A549 (cell line): ENCODE measurements at regions of chr19 and their contacts with region 1.

Region 1: DNA sequence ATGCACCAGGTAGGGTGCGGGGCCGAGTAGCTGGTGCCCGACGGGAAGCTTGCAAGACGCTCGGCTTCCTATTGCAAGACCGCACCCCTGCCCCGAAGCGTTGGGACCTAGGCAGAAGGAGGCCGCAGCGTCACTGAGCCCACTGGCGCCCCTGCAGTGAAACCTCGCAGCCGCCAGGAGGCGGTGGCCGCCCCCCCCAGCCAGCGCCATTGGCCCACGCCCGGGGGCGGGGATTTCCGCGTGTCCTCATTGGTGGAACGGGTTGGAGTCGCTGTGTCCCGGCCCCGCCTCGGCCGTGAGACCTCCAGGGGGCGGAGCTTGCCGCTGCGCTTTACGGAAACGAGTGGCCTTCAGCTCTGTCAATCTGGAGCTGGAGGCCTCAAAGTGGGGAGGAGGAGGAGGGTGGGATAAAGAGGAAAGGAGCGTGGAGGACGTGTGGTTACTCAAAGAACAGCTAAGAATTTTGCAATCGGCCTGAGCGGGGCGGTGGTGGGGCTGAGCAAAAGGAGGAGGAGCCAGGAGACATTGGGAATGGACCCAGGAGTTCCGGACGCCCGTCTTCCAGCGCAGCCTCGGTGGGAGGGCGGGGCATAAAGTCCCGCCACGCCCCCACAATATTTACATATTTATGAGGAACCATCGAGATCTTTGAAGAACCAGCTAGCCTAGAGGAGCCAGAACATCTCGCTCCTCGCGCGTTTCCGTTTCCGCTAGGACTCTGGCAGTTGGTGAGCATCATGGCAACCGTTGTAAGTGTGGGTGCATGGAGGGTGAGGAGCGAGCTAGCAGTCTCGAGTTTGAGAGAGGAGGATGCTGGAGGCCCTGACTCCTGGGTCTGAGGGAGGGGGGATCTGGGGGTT is at the starts of genes GYS1 and RUVBL2:
- DNase-seq: peak; percentile 100
- ATAC-seq: peak; percentile 89 to 94
- H3K4me3 ChIP-seq: peak within 1 kb of the TSS; percentile 73
- H3K27ac ChIP-seq: peak within 1 kb of the TSS; percentile 76 to 87
- H3K4me1 ChIP-seq: peaks cover 20% of the 10 kb centered on the region
- CTCF ChIP-seq: peak; percentile 82
- EP300 ChIP-seq: no peak
- POLR2A ChIP-seq: peak; percentile 92
- RAD21 ChIP-seq: peak in 1 of 2 experiments; percentile 39; a peak in 2 of 5 replicates
- polyA plus RNA-seq, gene GYS1: 10.3 and 16.4 TPM in 2 replicates
- polyA plus RNA-seq, gene RUVBL2: 146 and 186 TPM in 2 replicates

Region 2: DNA sequence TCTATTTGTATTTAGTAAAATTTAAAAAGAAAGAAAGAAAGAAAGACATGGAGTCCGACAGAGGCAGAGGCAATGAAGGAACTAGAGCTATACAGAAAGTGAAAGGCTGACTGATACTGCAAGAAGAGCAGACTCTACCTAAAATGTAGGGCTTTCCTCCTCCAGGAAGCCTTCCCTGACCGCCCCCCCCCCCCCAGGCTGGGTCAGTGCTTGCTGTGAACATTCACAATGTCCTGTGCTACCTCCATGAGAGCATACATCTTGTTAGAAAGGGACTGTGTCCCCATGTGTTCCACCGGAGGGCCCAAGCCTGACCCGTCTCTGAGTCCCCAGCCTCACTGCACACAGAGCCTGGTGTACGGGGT is 341.7 kb before region 1 on chr19:
- CTCF ChIA-PET with region 1: no interaction called
- POLR2A ChIA-PET with region 1: no interaction called
- DNase-seq: no peak
- ATAC-seq: peak; percentile 16 to 37; a peak in 3 of 6 replicates
- H3K4me3 ChIP-seq: no peak overlapping the region
- H3K27ac ChIP-seq: no peak overlapping the region
- H3K4me1 ChIP-seq: peaks cover 5% of the 10 kb centered on the region; the same call in 2 of the 3 replicates
- CTCF ChIP-seq: no peak
- EP300 ChIP-seq: no peak
- POLR2A ChIP-seq: no peak
- RAD21 ChIP-seq: no peak

Region 3: DNA sequence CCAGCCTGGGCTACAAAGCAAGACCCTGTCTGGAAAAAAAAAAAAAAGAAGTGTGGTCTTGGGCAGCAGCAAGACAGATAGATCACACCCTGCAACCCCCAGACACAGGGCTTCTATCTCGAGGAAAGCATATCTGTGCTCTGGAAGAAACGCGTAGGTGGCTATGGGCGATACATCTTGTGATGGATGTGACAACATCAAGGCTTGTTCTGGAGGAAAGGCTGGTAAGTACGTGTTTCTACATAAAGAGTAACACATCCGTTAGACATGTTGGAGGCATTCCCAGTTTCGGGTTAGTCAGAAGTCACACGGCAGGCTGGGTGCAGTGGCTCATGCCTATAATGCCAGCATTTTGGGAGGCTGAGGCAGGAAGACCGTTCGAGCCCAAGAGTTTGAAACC is 66.5 kb before region 1 on chr19:
- CTCF ChIA-PET with region 1: no interaction called
- POLR2A ChIA-PET with region 1: no interaction called
- DNase-seq: peak; percentile 65 to 87
- ATAC-seq: peak; percentile 67 to 84
- H3K4me3 ChIP-seq: no peak overlapping the region
- H3K27ac ChIP-seq: peak overlapping the region; percentile 67 to 85
- H3K4me1 ChIP-seq: peaks cover 41% of the 10 kb centered on the region
- CTCF ChIP-seq: no peak
- EP300 ChIP-seq: peak in 1 of 2 experiments; percentile 39; a peak in 1 of 5 replicates
- POLR2A ChIP-seq: no peak
- RAD21 ChIP-seq: no peak

Region 4: DNA sequence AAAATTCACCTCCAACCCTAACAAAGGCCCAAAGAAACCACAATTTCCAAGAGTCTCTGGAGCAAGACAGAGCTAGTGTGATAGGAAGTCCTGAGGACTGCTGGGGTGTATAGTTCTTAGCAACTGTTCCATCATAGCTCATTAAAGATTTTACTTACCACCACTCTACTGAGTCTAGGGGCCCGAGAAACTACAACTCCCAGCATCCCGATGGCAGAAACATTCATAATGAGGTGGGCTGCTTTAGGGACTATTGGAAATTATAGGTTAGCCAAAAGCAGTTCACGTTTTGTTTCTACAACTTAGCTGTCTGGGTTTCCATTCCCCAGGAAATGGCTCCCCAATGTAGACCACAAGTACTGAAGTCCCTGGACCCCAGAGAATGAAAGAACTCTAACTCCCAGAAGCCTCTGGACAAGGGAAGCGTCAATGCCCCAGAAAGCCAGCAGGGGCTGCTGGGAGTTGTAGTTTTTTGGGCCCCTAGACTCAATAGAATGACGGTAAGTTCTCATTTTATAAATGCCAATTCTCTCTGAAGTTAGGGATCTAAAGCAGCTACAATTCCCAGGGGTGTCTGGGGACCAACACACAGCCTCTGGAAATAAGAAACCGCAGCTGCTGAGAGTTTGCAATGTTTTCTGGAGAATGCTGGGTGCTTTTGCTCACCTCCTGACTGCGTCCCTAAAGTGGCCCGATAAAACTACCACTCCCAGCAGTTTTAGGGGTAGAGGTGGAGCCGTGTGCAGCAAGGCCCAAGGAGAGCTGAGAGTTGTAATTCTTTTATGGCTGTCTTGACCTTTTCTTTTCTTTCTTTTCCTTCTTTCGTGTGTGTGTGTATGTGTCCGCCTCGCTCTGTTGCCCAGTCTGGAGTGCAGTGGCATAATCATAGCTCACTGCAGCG is 17.2 kb before region 1 on chr19:
- CTCF ChIA-PET with region 1: interaction called, 360 read pairs
- POLR2A ChIA-PET with region 1: interaction called, 14 read pairs
- DNase-seq: peak in 1 of 2 experiments; percentile 47
- ATAC-seq: peak; percentile 46 to 72; a peak in 5 of 6 replicates
- H3K4me3 ChIP-seq: no peak overlapping the region
- H3K27ac ChIP-seq: no peak overlapping the region
- H3K4me1 ChIP-seq: peaks cover 13% of the 10 kb centered on the region
- CTCF ChIP-seq: no peak
- EP300 ChIP-seq: no peak
- POLR2A ChIP-seq: no peak
- RAD21 ChIP-seq: no peak

Region 5: GRCh38 chr19:49017666-49018351 is 24.4 kb after region 1 on chr19:
- CTCF ChIA-PET with region 1: interaction called, 408 read pairs
- POLR2A ChIA-PET with region 1: interaction called, 16 read pairs
- DNase-seq: peak in 1 of 2 experiments; percentile 52
- ATAC-seq: peak; percentile 27 to 66
- H3K4me3 ChIP-seq: peak overlapping the region; percentile 21; the same call in 1 of the 3 replicates
- H3K27ac ChIP-seq: peak overlapping the region in 1 of 2 experiments; percentile 36; a peak in 1 of 6 replicates
- H3K4me1 ChIP-seq: peaks cover 14% of the 10 kb centered on the region; the same call in 2 of the 3 replicates
- CTCF ChIP-seq: peak; percentile 33
- EP300 ChIP-seq: no peak
- POLR2A ChIP-seq: no peak
- RAD21 ChIP-seq: no peak

Region 6: GRCh38 chr19:49056010-49056901 is 62.9 kb after region 1 on chr19:
- CTCF ChIA-PET with region 1: interaction called, 48 read pairs
- POLR2A ChIA-PET with region 1: interaction called, 5 read pairs
- DNase-seq: peak; percentile 64 to 92
- ATAC-seq: peak; percentile 88 to 92
- H3K4me3 ChIP-seq: peak overlapping the region; percentile 54
- H3K27ac ChIP-seq: peak overlapping the region; percentile 64 to 87
- H3K4me1 ChIP-seq: peaks cover 11% of the 10 kb centered on the region
- CTCF ChIP-seq: peak; percentile 15; the same call in 1 of the 3 replicates
- EP300 ChIP-seq: no peak
- POLR2A ChIP-seq: peak; percentile 48; the same call in 1 of the 2 replicates
- RAD21 ChIP-seq: no peak